HCT116 (cell line): ENCODE measurements at regions of chr12 and their contacts with region 1.

Region 1: GRCh38 chr12:6285063-6285477 is 25.4 kb upstream of the PLEKHG6 start:
- DNase-seq: no peak
- ATAC-seq: peak; percentile 64
- H3K4me3 ChIP-seq: no peak overlapping the region
- H3K27ac ChIP-seq: no peak overlapping the region
- H3K4me1 ChIP-seq: peaks cover 29 to 66% of the 10 kb centered on the region in 2 experiments
- H3K27me3 ChIP-seq: no peaks in the 10 kb centered on the region
- CTCF ChIP-seq: peak in 2 of 3 experiments; percentile 76 to 88; a peak in 4 of 6 replicates
- POLR2A ChIP-seq: no peak
- RAD21 ChIP-seq: no peak

Region 2: GRCh38 chr12:6062757-6063735 is 222.0 kb before region 1 on chr12:
- CTCF ChIA-PET with region 1: interaction called, 62 read pairs
- POLR2A ChIA-PET with region 1: interaction called, 3 read pairs
- RAD21 ChIA-PET with region 1: interaction called, 3 to 9 read pairs
- intact Hi-C with region 1: loop called (anchors 1 kb)
- DNase-seq: no peak
- ATAC-seq: peak; percentile 85
- H3K4me3 ChIP-seq: no peak overlapping the region
- H3K27ac ChIP-seq: no peak overlapping the region
- H3K4me1 ChIP-seq: peaks cover 0 to 21% of the 10 kb centered on the region in 2 experiments; a peak in 3 of 4 replicates
- H3K27me3 ChIP-seq: no peaks in the 10 kb centered on the region
- CTCF ChIP-seq: peak; percentile 90 to 98 (median 97)
- POLR2A ChIP-seq: no peak
- RAD21 ChIP-seq: peak; percentile 98

Region 3: DNA sequence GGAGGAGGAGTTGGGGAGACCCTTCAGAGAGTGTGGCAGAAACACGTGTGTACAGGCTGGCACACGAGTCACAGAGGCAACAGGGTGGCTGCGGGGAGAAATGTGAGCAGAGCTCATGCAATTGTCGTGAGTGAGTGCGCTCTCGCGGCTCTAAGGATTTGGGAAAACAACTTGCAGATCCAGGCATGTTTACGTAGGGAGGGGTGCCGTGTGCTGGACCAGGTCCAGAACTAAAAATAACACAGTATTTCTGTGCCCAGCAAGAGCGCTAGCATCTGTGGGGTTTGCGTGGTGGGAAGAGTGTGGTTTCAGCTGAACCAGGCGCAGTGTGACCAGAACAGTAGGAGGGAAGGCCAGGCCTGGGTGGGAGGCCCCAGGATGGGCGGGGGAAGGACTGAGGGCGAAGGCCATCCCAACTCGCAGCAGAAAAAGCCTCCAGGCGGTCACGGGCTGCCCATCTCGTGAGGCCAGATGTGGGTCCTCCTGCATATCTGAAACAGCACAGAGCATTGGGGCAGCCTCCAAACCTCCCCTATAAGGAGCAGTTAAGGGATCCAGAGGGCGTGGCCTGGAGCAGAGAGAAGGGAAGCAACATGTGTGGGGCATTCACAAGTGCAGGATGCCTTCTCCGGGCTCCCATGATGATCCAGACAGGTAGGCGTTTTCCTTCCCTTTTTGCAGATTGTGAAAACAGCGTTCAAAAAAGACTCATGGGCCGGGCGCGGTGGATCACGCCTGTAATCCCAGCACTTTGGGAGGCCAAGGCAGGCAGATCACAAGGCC is 102.8 kb before region 1 on chr12:
- CTCF ChIA-PET with region 1: no interaction called
- POLR2A ChIA-PET with region 1: no interaction called
- RAD21 ChIA-PET with region 1: no interaction called
- intact Hi-C with region 1: no loop called
- DNase-seq: no peak
- ATAC-seq: no peak
- H3K4me3 ChIP-seq: no peak overlapping the region
- H3K27ac ChIP-seq: no peak overlapping the region
- H3K4me1 ChIP-seq: peaks cover 16 to 51% of the 10 kb centered on the region in 2 experiments
- H3K27me3 ChIP-seq: no peaks in the 10 kb centered on the region
- CTCF ChIP-seq: no peak
- POLR2A ChIP-seq: no peak
- RAD21 ChIP-seq: no peak

Region 4: DNA sequence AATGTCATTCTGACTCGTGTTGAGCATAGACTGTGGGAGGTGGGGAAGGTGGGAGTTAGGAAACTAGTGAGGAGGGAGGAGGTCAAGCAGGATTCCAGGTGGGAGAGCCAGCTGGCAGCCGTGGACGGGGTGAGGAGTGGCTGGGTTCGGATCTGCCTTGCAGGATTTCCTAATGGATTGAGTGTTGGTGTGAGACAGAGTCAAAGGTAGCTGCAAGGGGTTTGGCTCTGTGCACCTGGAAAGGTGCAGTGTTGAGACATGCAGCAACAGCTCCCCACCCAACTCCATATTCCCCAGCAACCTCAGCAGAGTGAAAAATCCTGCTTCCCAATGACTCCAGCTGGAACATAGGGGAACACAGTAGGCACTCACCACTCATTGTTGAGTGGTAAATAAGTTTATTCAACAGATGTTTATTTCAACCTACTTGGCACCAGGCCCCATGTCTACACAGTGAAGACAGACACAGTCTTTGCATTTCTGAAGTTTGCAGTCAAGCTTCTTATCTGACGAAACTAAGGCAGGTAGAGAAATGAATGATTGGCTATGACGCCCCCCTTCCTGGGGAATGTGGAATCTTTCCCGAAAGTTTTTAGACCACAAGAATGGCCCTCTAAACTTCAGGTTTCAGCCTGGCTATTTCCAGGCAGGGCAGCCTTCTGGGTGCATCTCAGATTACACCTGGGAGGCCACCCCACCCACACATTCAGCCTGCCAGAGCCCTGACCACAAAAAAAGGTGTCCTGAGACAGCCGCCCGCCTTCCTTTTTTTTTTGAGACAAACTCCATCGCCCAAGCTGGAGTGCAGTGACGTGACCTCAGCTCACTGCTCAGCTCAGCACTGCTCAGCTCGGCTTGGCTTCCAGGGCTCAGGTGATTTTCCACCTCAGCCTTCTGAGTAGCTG is 12.5 kb before region 1 on chr12:
- CTCF ChIA-PET with region 1: interaction called, 10 read pairs
- POLR2A ChIA-PET with region 1: no interaction called
- RAD21 ChIA-PET with region 1: no interaction called
- intact Hi-C with region 1: no loop called
- DNase-seq: peak; percentile 88
- ATAC-seq: peak; percentile 85
- H3K4me3 ChIP-seq: peak overlapping the region; percentile 7 to 38
- H3K27ac ChIP-seq: peak overlapping the region; percentile 84
- H3K4me1 ChIP-seq: peaks cover 46 to 48% of the 10 kb centered on the region in 2 experiments
- H3K27me3 ChIP-seq: no peaks in the 10 kb centered on the region; the same call in 1 of the 2 replicates
- CTCF ChIP-seq: no peak
- POLR2A ChIP-seq: no peak
- RAD21 ChIP-seq: no peak

Region 5: GRCh38 chr12:6302621-6303020 is 17.6 kb after region 1 on chr12:
- CTCF ChIA-PET with region 1: no interaction called
- POLR2A ChIA-PET with region 1: no interaction called
- RAD21 ChIA-PET with region 1: no interaction called
- intact Hi-C with region 1: no loop called
- DNase-seq: no peak
- ATAC-seq: no peak
- H3K4me3 ChIP-seq: no peak overlapping the region
- H3K27ac ChIP-seq: no peak overlapping the region
- H3K4me1 ChIP-seq: peaks cover 0 to 12% of the 10 kb centered on the region in 2 experiments; a peak in 2 of 4 replicates
- H3K27me3 ChIP-seq: no peaks in the 10 kb centered on the region
- CTCF ChIP-seq: no peak
- POLR2A ChIP-seq: no peak
- RAD21 ChIP-seq: no peak